ENCODE measurements at regions of chr10 and their contacts with region 1.

Region 1: GRCh38 chr10:133394064-133394663 is at the start of gene MTG1:
- DNase-seq: peak; percentile 78 to 97 (median 91)
- H3K4me3 ChIP-seq: peak within 1 kb of the TSS; percentile 65 to 99 (median 93)
- H3K27ac ChIP-seq: peak within 1 kb of the TSS in 58 of 59 donors; percentile 33 to 93 (median 83)
- H3K27me3 ChIP-seq: no peaks in the 10 kb centered on the region
- CTCF ChIP-seq: peak in 54 of 56 donors; percentile 34 to 82 (median 58)
- total RNA-seq, gene MTG1: 33.3 to 78.1 (median 50.8) TPM

Region 2: GRCh38 chr10:133230387-133231195 is 163.6 kb before region 1 on chr10:
- intact Hi-C with region 1: no loop called
- DNase-seq: peak in 5 of 10 donors; percentile 21 to 65 (median 45)
- H3K4me3 ChIP-seq: peak overlapping the region in 16 of 59 donors; percentile 5 to 50 (median 28)
- H3K27ac ChIP-seq: no peak overlapping the region
- H3K27me3 ChIP-seq: peaks cover 0 to 72% (median 48%) of the 10 kb centered on the region in 45 donors
- CTCF ChIP-seq: no peak

Region 3: DNA sequence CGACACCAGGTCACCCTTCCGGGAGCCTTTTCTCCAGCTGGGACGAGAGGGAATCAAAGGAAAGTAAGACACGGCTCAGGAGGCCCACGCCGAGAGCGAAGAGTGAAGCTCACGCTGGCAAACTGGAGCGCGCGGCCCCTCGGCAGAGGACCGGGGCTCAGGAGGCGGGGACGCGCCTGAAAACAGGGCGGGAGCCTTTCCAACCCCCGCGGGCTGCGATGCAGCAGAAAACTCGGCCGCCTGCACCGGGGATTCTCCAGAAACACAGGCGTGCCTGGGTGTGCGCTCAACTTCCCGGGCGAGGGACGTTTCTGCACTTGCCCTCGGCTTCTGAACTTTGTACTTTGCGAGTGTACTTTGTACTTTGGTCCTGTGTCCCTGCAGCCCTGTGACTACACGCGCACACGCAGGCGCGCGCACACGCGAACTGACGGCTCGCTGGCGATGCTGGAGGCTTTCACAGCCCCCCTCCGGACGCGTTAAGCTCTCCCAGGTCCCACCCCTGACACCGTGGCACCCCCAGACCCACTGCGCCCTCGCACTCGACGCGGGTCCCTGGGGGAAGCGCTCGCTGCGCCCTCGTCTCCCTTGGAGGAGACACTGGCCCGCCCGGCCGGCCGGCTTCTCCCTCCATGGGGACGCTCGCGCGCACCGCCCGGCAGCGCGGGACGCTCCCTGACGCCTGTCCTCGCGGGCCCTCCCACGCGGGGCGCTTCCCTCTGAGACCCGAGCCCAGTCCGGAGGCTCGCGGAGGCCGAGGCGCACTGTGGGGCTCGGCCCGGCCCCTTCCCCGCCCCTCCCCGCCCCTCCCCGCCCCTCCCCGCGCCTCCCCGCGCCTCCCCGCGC is 15.7 kb before region 1 on chr10:
- intact Hi-C with region 1: loop called (anchors 2 kb)
- DNase-seq: peak; percentile 52 to 83 (median 70)
- H3K4me3 ChIP-seq: peak overlapping the region; percentile 46 to 99 (median 88)
- H3K27ac ChIP-seq: peak overlapping the region; percentile 23 to 99 (median 94)
- H3K27me3 ChIP-seq: no peaks in the 10 kb centered on the region
- CTCF ChIP-seq: peak in 2 of 56 donors; percentile 1 to 6

Measured in dorsolateral prefrontal cortex (tissue), 120 donors.